Activated CD4-positive, alpha-beta memory T cell treated with anti-CD3 and anti-CD28 coated beads for 36 hours (primary cell): ENCODE measurements at regions of chr5 and their contacts with region 1.

Region 1: DNA sequence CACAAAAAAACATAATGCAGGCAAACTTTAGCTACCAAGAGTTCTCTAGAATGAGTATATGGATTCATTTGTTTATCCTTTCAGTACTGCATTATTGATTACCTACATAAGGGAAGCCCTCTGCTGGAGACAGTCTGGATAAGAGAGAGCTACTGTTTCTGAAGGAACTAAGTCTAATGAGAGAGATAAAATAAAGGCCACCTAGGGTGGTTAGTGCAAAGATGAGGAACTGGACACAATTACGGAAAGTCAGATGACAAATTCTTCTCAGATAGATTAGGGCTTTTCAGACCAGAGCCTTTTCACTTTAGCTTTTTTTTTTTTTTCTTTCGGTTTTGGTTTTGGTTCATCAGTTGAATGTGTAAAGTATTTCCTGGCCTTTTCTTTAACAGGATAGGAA is 31.3 kb downstream of the ISOC1 start:
- DNase-seq: no peak
- H3K4me3 Mint-ChIP-seq: peak overlapping the region; percentile 47
- H3K27ac Mint-ChIP-seq: peak overlapping the region; percentile 55
- H3K4me1 Mint-ChIP-seq: peaks cover 9% of the 10 kb centered on the region
- H3K27me3 Mint-ChIP-seq: no peaks in the 10 kb centered on the region

Region 2: DNA sequence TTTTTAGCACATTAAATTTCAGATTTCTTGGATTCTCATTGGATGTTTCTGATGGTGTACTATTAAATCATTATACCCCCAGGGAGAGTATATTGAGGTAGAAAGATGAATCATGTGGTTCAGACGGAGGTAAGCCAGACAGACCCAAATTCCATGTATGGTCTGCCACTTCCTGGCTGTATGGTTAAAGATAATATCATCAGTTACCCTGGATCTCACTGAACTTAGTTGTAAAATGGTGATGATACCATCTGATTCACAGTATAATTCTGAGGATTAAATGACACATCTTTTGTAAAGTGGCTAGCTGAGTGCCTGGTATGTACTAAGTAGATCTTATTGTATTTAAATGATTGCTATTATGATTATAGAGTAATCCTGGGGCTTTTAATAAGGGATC is 151.2 kb before region 1 on chr5:
- CTCF ChIA-PET with region 1: no interaction called
- POLR2A ChIA-PET with region 1: no interaction called
- intact Hi-C with region 1: no loop called
- DNase-seq: no peak
- H3K4me3 Mint-ChIP-seq: no peak overlapping the region
- H3K27ac Mint-ChIP-seq: no peak overlapping the region
- H3K4me1 Mint-ChIP-seq: no peaks in the 10 kb centered on the region
- H3K27me3 Mint-ChIP-seq: peaks cover 3% of the 10 kb centered on the region

Region 3: GRCh38 chr5:129113871-129114270 is 11.9 kb before region 1 on chr5:
- CTCF ChIA-PET with region 1: interaction called, 5 read pairs
- POLR2A ChIA-PET with region 1: no interaction called
- intact Hi-C with region 1: loop called (anchors 1 kb)
- DNase-seq: no peak
- H3K4me3 Mint-ChIP-seq: no peak overlapping the region
- H3K27ac Mint-ChIP-seq: no peak overlapping the region
- H3K4me1 Mint-ChIP-seq: peaks cover 5% of the 10 kb centered on the region
- H3K27me3 Mint-ChIP-seq: no peaks in the 10 kb centered on the region